H1 (cell line): ENCODE measurements at regions of chr6 and their contacts with region 1.

Region 1: DNA sequence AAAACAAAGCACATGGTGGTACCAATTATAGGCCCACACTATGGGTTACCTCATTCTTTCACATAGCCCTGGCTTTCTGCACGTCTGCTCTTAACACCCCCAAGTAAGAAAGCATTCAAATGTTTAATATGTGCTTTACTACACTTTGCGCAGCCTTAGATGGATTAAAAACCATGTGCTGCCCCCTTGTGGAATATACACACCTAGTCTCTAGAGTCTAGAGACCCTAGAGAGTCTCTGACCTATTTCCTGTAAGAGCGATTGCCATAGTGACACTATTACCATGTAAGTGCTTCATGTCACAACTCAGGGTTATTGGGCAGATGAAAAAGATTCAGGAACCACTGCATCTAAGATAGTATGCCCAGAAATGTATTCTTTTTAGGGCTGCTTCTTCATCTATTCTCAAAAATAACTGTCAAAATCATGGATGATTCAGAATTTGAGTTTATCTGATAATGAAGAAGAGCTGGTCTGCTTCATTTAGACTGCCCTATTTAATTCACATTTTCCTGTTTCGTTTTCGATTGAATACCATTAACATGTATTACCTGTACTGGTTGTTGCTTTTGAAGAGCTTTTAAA is 186.3 kb downstream of the ADGB start:
- DNase-seq: no peak
- H3K4me3 ChIP-seq: no peak overlapping the region
- H3K27ac ChIP-seq: no peak overlapping the region
- H3K4me1 ChIP-seq: no peaks in the 10 kb centered on the region
- H3K27me3 ChIP-seq: no peaks in the 10 kb centered on the region
- CTCF ChIP-seq: peak in 2 of 3 experiments; percentile 47 to 68; a peak in 3 of 4 replicates
- EP300 ChIP-seq: no peak
- POLR2A ChIP-seq: no peak
- RAD21 ChIP-seq: peak; percentile 52 to 63; a peak in 3 of 4 replicates

Region 2: GRCh38 chr6:146719387-146719786 is 65.7 kb before region 1 on chr6:
- CTCF ChIA-PET with region 1: no interaction called
- POLR2A ChIA-PET with region 1: no interaction called
- DNase-seq: no peak
- H3K4me3 ChIP-seq: no peak overlapping the region
- H3K27ac ChIP-seq: no peak overlapping the region
- H3K4me1 ChIP-seq: no peaks in the 10 kb centered on the region; a peak in 2 of 7 replicates
- H3K27me3 ChIP-seq: no peaks in the 10 kb centered on the region
- CTCF ChIP-seq: no peak
- EP300 ChIP-seq: no peak
- POLR2A ChIP-seq: no peak
- RAD21 ChIP-seq: no peak

Region 3: DNA sequence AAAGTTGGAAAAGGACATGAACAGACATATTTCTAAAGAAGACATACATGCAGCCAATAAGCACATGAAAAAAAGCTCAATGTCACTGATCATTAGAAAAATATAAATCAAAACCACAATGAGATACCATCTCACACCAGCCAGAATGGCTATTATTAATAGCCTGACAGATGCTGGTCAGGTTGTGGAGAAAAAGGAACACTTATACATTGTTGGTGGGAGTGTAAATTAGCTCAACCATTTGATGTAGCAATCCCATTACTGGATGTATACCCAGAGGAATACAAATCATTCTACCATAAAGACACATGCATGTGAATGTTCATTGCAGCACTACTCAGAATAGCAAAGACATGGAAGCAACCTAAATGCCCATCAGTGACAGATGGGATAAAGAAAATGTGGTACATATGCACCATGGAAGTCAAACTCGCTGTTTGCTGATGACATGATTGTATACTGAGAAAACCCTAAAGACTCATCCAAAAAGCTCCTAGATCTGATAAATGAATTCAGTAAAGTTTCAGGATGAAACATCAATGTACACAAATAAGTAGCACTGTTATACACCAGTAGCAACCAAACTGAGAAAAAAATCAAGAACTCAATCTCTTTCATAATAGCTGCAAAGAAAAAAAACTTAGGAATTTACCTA is 10.5 kb after region 1 on chr6:
- CTCF ChIA-PET with region 1: interaction called, 10 read pairs
- POLR2A ChIA-PET with region 1: no interaction called
- DNase-seq: no peak
- H3K4me3 ChIP-seq: no peak overlapping the region
- H3K27ac ChIP-seq: no peak overlapping the region
- H3K4me1 ChIP-seq: peaks cover 0 to 2% (median 0%) of the 10 kb centered on the region in 4 experiments; a peak in 1 of 7 replicates
- H3K27me3 ChIP-seq: no peaks in the 10 kb centered on the region
- CTCF ChIP-seq: no peak
- EP300 ChIP-seq: no peak
- POLR2A ChIP-seq: no peak
- RAD21 ChIP-seq: no peak